CD4-positive, alpha-beta memory T cell (primary cell): ENCODE measurements at regions of chr14 and their contacts with region 1.

Region 1: DNA sequence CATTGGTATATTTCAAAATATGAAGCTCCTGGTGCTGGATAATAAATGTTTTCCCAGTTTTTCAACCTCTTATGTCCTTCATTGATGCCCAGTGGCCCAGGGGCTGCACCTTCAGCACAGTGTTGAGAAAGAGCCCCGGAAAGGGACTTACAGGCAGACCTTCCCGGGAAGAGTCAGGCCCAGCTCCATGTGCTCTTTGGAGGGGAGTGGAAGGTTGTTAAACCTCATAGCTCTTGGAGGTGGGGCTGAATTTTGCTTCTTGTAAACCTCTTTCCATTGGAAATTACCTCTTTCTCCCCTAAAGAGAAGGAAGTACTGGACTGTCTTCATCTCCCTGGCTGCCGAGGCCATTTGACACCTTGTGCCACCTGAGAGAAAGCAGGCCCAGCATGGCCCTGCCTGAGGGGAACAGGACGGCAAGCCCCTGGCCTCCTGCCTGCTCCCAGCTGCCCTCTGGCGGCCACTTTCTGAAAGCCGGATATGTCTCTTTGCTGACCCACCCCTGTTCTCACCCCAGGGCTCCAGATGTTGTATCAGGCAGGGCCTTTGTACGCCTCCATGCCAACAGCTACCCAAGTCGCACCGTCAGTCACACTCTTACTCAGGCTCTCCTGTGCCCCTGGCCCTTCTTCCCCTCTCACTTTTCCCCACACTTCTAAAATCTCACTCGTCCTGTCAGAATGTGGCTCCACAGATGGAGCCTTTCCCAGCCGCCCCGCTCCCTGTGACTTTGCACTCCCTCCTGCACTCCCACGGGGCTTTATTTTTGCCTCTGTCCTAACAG is 43.0 kb downstream of the EVL start:
- DNase-seq: peak; percentile 78 to 87 (median 83)
- H3K4me3 ChIP-seq: no peak overlapping the region
- H3K4me3 Mint-ChIP-seq: peak overlapping the region; percentile 24 to 79 (median 60)
- H3K27ac ChIP-seq: peak overlapping the region; percentile 67
- H3K27ac Mint-ChIP-seq: peak overlapping the region; percentile 95 to 98 (median 96)
- H3K4me1 ChIP-seq: peaks cover 75% of the 10 kb centered on the region
- H3K4me1 Mint-ChIP-seq: peaks cover 64 to 83% (median 71%) of the 10 kb centered on the region in 4 donors
- H3K27me3 ChIP-seq: no peaks in the 10 kb centered on the region
- H3K27me3 Mint-ChIP-seq: no peaks in the 10 kb centered on the region

Region 2: DNA sequence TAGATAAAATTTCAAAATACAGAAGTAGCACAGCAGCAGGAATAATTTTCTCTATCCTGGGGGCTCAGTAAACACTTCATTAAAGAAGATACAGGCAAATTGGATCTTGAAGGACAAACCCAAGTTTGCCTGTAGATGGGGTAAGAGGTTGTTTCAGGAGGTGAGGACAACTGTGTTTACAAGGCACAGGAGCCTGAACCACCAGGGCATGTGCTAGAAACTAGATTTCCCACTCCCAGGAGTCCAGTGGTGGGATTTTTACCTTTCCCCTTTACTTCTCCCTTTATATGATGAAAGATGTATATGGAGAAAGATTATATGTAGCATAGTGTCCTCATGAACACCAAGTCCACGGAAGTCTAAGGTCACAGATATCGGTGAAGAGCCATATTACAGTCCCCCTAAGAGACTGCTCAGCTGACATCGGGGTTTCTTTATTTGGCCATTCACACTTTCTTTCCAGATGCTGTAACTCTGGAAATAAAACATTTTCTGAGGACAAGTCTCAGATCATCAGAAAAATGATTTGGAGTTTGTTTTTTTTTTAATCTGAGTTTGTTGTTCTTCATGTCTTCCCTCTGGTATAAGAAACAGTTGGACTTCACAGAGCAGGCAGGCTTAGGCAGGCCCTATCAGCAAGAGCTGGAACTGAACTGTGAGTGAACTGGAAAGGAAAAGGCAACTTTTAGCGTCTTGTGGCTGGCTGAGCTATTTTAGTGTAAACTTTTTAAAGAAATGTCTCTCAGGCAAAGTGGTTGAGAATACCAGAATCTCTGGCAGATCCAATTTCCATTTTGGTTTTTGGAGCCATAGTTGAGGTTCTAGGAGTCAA is 51.1 kb before region 1 on chr14:
- CTCF ChIA-PET with region 1: interaction called, 1,350 read pairs
- POLR2A ChIA-PET with region 1: interaction called, 941 read pairs
- intact Hi-C with region 1: loop called (anchors 1 kb)
- DNase-seq: peak; percentile 61 to 71 (median 66)
- H3K4me3 ChIP-seq: no peak overlapping the region
- H3K4me3 Mint-ChIP-seq: peak overlapping the region; percentile 20 to 80 (median 40)
- H3K27ac ChIP-seq: peak overlapping the region; percentile 3
- H3K27ac Mint-ChIP-seq: peak overlapping the region; percentile 80 to 95 (median 92)
- H3K4me1 ChIP-seq: peaks cover 56% of the 10 kb centered on the region
- H3K4me1 Mint-ChIP-seq: peaks cover 37 to 58% (median 46%) of the 10 kb centered on the region in 4 donors
- H3K27me3 ChIP-seq: no peaks in the 10 kb centered on the region
- H3K27me3 Mint-ChIP-seq: no peaks in the 10 kb centered on the region

Region 3: DNA sequence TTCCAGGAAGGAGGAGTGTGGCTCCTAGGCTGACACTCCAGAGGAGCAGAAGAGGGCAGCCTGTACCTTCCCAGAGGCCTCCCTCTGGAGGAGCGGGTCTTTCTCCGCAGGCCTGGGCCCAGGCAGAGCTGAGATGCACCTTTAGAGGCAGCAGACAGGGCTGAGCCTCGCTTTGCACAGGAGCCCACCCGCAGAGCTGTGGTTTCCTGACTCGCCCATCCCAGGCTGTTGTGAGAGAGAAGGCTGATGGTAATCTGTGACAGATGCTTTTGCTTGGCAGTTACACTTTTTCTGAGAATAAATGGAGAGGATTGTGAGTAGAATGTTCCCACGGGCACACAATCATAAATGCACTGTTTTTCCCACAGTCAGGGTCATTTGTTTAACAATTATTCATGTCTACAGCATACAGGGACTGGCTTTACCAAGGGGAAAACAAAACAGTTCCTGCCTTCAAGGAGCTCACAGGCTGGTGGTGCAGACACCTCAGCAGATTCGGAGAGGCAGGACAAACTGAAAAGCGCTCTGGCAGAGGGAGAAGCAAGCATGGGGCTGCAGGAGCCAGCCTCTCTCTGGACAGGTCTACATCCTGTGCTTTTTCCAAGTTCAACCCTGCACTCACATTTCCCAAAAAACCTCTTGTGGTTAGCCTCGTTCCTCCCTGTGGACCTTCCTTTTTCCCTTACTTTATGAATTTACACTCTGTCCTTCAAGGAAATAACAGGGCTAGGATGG is 29.1 kb before region 1 on chr14:
- CTCF ChIA-PET with region 1: interaction called, 1,350 read pairs
- POLR2A ChIA-PET with region 1: interaction called, 941 read pairs
- intact Hi-C with region 1: loop called (anchors 1 kb)
- DNase-seq: peak; percentile 87 to 96 (median 88)
- H3K4me3 ChIP-seq: peak overlapping the region; percentile 41 to 52
- H3K4me3 Mint-ChIP-seq: peak overlapping the region; percentile 83 to 88 (median 86)
- H3K27ac ChIP-seq: peak overlapping the region; percentile 62
- H3K27ac Mint-ChIP-seq: peak overlapping the region; percentile 91 to 99 (median 95)
- H3K4me1 ChIP-seq: peaks cover 100% of the 10 kb centered on the region
- H3K4me1 Mint-ChIP-seq: peaks cover 81 to 100% (median 92%) of the 10 kb centered on the region in 4 donors
- H3K27me3 ChIP-seq: no peaks in the 10 kb centered on the region
- H3K27me3 Mint-ChIP-seq: no peaks in the 10 kb centered on the region

Region 4: GRCh38 chr14:100091386-100091785 is 16.8 kb before region 1 on chr14:
- CTCF ChIA-PET with region 1: interaction called, 1,350 read pairs
- POLR2A ChIA-PET with region 1: interaction called, 410 read pairs
- intact Hi-C with region 1: loop called (anchors 2 kb)
- DNase-seq: no peak
- H3K4me3 ChIP-seq: no peak overlapping the region
- H3K4me3 Mint-ChIP-seq: peak overlapping the region in 7 of 8 donors; percentile 6 to 74 (median 55)
- H3K27ac ChIP-seq: peak overlapping the region; percentile 26
- H3K27ac Mint-ChIP-seq: peak overlapping the region; percentile 79 to 95 (median 89)
- H3K4me1 ChIP-seq: peaks cover 100% of the 10 kb centered on the region
- H3K4me1 Mint-ChIP-seq: peaks cover 65 to 100% (median 83%) of the 10 kb centered on the region in 4 donors
- H3K27me3 ChIP-seq: no peaks in the 10 kb centered on the region
- H3K27me3 Mint-ChIP-seq: no peaks in the 10 kb centered on the region

Region 5: GRCh38 chr14:100096570-100096971 is 11.7 kb before region 1 on chr14:
- CTCF ChIA-PET with region 1: interaction called, 1,350 read pairs
- POLR2A ChIA-PET with region 1: interaction called, 15 read pairs
- intact Hi-C with region 1: loop called (anchors 2 kb)
- DNase-seq: no peak
- H3K4me3 ChIP-seq: no peak overlapping the region
- H3K4me3 Mint-ChIP-seq: peak overlapping the region in 7 of 8 donors; percentile 29 to 68 (median 51)
- H3K27ac ChIP-seq: peak overlapping the region; percentile 28
- H3K27ac Mint-ChIP-seq: peak overlapping the region; percentile 39 to 95 (median 92)
- H3K4me1 ChIP-seq: peaks cover 100% of the 10 kb centered on the region
- H3K4me1 Mint-ChIP-seq: peaks cover 73 to 100% (median 85%) of the 10 kb centered on the region in 4 donors
- H3K27me3 ChIP-seq: no peaks in the 10 kb centered on the region
- H3K27me3 Mint-ChIP-seq: no peaks in the 10 kb centered on the region